H1 (cell line): ENCODE measurements at regions of chr18 and their contacts with region 1.

Region 1: DNA sequence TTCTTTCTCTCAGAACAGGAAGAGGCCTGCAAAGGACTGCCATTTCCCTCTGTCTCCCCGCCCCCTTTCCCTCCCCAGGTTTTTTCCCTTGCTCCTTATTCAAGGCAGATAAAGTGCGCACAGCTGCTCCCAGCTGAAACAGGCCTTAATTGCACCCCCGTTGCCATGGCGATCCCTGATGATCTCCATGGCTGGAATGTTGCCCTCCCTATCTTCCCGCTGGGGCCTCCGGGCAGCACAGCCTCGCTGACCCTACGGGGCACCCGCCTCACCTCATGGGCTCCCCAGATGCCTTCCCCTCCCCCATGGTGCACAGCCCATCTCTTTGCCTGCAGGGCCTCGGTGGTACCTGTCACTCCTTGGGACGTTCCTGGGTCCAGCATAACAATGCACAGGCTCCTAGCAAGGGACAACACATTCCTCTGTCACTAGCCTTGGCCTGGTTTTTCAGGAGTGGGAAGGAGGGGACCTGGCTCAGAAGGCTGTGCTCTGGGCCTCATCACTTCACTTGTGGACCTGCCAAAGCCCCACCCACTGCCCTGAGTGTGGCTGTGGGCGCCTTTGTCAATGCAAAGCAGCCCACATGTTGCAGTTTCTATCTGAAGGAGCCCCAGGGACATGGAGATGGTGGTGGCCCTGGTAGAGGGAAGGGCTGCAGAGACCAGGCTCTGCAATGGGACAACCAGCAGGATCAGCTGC is 115.0 kb downstream of the CELF4 start:
- DNase-seq: peak; percentile 46 to 74
- H3K4me3 ChIP-seq: peak overlapping the region in 1 of 4 experiments; percentile 18; a peak in 1 of 8 replicates
- H3K27ac ChIP-seq: 0 out of 2 replicates have a peak overlapping the region, but pooled peaks have one; percentile 18
- H3K4me1 ChIP-seq: peaks cover 8 to 16% (median 10%) of the 10 kb centered on the region in 4 experiments
- H3K27me3 ChIP-seq: peaks cover 0 to 3% (median 0%) of the 10 kb centered on the region in 4 experiments; a peak in 2 of 7 replicates
- CTCF ChIP-seq: no peak
- EP300 ChIP-seq: peak in 1 of 2 experiments; percentile 61; a peak in 1 of 3 replicates
- POLR2A ChIP-seq: no peak
- RAD21 ChIP-seq: no peak

Region 2: DNA sequence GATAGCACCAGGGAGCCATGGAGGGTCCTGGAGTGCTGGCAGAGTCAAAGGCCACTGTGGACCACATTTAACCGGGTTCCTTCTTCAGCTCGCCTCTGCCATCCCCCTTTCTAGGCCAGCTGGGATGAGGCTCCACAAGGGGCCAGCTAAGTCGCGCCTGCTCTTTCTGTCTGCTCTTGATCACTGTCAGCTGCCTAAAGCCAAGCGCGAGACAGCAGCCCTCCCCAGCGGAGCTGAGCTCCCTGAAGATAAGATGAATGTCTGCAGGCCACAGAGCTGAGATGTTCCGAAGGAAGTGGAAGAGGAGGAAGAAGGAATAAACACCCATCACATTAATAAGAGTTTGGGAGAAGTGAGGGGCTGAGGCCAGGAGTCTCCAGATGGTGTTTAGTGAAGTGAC is 15.4 kb after region 1 on chr18:
- CTCF ChIA-PET with region 1: interaction called, 144 read pairs
- POLR2A ChIA-PET with region 1: interaction called, 3 read pairs
- DNase-seq: no peak
- H3K4me3 ChIP-seq: no peak overlapping the region
- H3K27ac ChIP-seq: no peak overlapping the region
- H3K4me1 ChIP-seq: no peaks in the 10 kb centered on the region; a peak in 1 of 7 replicates
- H3K27me3 ChIP-seq: no peaks in the 10 kb centered on the region
- CTCF ChIP-seq: no peak
- EP300 ChIP-seq: no peak
- POLR2A ChIP-seq: no peak
- RAD21 ChIP-seq: no peak